ENCODE measurements at regions of chr2 and their contacts with region 1.

Region 1: GRCh38 chr2:7930800-7931635 is 750.8 kb upstream of the ID2 start:
- DNase-seq: no peak
- ATAC-seq: peak; percentile 69
- H3K4me3 Mint-ChIP-seq: no peak overlapping the region
- H3K27ac Mint-ChIP-seq: peak overlapping the region; percentile 65
- H3K4me1 Mint-ChIP-seq: peaks cover 13% of the 10 kb centered on the region
- H3K27me3 Mint-ChIP-seq: no peaks in the 10 kb centered on the region
- CTCF ChIP-seq: no peak

Region 2: GRCh38 chr2:7825591-7826312 is 105.3 kb before region 1 on chr2:
- CTCF ChIA-PET with region 1: no interaction called
- POLR2A ChIA-PET with region 1: no interaction called
- intact Hi-C with region 1: loop called (anchors 5 kb)
- DNase-seq: peak; percentile 76
- ATAC-seq: peak; percentile 94
- H3K4me3 Mint-ChIP-seq: no peak overlapping the region
- H3K27ac Mint-ChIP-seq: peak overlapping the region; percentile 78
- H3K4me1 Mint-ChIP-seq: peaks cover 24% of the 10 kb centered on the region
- H3K27me3 Mint-ChIP-seq: peaks cover 1% of the 10 kb centered on the region
- CTCF ChIP-seq: no peak

Measured in activated CD8-positive, alpha-beta T cell treated with anti-CD3 and anti-CD28 coated beads for 36 hours (primary cell).